CD4-positive, alpha-beta T cell (primary cell): ENCODE measurements at regions of chr17 and their contacts with region 1.

Region 1: DNA sequence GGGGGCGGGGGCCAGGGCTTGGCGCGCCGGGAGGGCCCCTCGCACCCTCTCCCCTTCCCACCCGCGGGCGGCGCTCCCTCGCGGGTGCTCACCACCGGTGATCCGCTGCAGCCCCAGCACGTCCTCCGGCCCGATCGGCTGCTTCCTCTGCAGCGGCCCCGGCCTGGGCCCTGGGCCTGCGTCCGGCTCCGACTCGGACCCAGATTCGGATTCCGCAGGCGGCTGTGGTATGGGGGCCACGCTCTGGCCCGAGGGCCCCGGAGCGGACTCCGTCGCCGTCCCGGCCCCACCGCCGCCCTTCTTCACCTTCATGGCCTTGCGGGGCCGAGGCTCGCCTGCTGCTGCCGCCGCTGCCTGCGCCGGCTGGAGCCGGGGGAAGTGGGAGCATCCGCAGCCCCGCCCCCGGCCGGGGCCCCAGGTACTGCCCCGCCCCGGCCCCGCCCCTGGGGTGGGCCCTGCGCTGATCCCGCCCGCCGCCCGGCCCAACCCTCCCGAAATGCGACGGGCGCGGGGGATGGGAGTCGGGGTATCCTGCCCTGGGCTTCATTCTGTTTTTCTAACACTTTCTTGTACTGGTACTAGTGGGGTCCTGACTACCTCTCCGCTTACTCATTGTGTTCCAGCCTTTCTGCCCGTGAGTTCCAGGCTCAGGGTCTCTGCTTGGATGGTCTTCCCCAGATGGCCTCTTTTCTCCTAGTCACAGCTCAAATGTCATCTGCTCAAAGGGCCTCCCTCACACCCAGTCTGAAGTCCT is at the start of gene UNC119:
- DNase-seq: peak; percentile 62 to 91 (median 77)
- ATAC-seq: peak; percentile 68
- H3K4me3 ChIP-seq: peak within 1 kb of the TSS; percentile 54
- H3K4me3 Mint-ChIP-seq: peak within 1 kb of the TSS; percentile 94
- H3K27ac ChIP-seq: peak within 1 kb of the TSS; percentile 48 to 76
- H3K27ac Mint-ChIP-seq: peak within 1 kb of the TSS; percentile 93
- H3K4me1 ChIP-seq: peaks cover 54% of the 10 kb centered on the region
- H3K4me1 Mint-ChIP-seq: peaks cover 52% of the 10 kb centered on the region
- H3K27me3 ChIP-seq: no peaks in the 10 kb centered on the region
- H3K27me3 Mint-ChIP-seq: no peaks in the 10 kb centered on the region
- CTCF ChIP-seq: no peak
- total RNA-seq, gene UNC119: 77.1 to 83.9 TPM

Region 2: DNA sequence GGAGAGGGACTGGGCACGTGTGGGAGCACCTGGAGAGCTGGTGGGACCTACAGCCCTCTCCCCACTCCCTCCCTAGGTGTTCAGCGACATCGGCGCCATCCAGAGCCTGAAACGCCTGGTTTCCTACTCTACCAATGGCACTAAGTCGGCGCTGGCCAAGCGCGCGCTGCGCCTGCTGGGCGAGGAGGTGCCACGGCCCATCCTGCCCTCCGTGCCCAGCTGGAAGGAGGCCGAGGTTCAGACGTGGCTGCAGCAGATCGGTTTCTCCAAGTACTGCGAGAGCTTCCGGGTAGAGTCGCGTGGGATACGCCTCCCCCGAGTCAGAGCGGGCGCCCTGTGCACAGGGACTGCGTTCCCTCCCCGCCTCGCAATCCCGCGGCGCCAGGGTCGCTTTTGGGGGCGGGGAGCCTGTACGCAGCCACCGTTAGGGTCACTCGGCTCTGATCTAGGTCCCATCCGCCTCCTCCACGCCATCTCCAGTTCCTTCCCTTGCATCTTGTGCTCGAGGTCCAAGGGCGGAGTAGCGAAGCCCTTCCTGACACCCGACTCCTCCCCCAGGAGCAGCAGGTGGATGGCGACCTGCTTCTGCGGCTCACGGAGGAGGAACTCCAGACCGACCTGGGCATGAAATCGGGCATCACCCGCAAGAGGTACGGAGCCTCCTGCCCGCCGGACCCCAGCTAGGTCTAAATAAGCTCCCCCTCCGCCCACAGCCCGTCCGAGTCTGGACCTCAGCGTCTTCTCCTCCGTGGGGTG is 168.0 kb before region 1 on chr17:
- CTCF ChIA-PET with region 1: no interaction called
- POLR2A ChIA-PET with region 1: no interaction called
- intact Hi-C with region 1: loop called in 1 of 2 experiments (anchors 10 kb)
- DNase-seq: peak in 13 of 14 experiments; percentile 44 to 78 (median 58)
- ATAC-seq: peak; percentile 93
- H3K4me3 ChIP-seq: peak overlapping the region; percentile 94
- H3K4me3 Mint-ChIP-seq: peak overlapping the region; percentile 94
- H3K27ac ChIP-seq: peak overlapping the region in 1 of 2 donors; percentile 17
- H3K27ac Mint-ChIP-seq: peak overlapping the region; percentile 64
- H3K4me1 ChIP-seq: peaks cover 29% of the 10 kb centered on the region
- H3K4me1 Mint-ChIP-seq: peaks cover 36% of the 10 kb centered on the region
- H3K27me3 ChIP-seq: no peaks in the 10 kb centered on the region
- H3K27me3 Mint-ChIP-seq: peaks cover 8% of the 10 kb centered on the region
- CTCF ChIP-seq: no peak

Region 3: DNA sequence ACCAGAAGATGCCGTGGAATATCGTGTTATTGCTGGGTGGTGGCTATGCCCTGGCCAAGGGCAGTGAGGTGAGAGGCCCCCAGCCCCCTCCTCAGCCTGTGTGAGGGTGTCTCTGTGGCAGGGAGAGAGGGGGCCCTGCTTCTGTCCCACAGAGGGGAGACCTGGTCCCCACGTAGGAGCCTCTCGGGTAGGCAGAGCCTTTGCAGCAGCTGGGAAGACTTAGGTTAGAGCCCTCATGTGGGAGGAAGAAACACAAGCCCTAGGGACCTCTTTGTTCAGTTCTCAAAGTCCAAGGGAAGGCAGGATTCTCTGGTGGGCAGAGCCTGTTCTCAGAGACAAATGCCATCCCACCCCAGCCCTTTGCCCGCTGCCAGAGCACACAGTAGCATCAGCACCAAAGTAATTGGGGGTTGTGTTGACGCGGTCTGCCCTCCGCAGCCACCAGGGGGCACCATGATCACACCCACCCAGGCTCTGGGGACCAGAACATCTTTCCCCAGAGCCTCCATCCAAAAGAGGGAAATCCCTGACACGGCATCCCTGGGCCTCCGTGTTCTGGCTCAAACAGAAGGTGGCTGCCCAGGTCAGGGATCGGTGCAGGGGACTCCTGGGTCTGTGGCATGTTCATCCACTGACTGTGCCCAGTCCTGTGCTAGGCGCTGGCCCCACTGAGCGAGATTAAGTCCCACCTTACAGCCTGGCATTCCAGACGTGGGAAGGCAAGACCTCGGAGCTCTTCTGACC is 57.8 kb before region 1 on chr17:
- CTCF ChIA-PET with region 1: no interaction called
- POLR2A ChIA-PET with region 1: no interaction called
- intact Hi-C with region 1: loop called in 1 of 2 experiments (anchors 2 kb)
- DNase-seq: peak; percentile 65 to 87 (median 78)
- ATAC-seq: peak; percentile 89
- H3K4me3 ChIP-seq: no peak overlapping the region
- H3K4me3 Mint-ChIP-seq: no peak overlapping the region
- H3K27ac ChIP-seq: no peak overlapping the region
- H3K27ac Mint-ChIP-seq: no peak overlapping the region
- H3K4me1 ChIP-seq: no peaks in the 10 kb centered on the region
- H3K4me1 Mint-ChIP-seq: no peaks in the 10 kb centered on the region
- H3K27me3 ChIP-seq: peaks cover 0 to 6% of the 10 kb centered on the region in 2 experiments
- H3K27me3 Mint-ChIP-seq: no peaks in the 10 kb centered on the region
- CTCF ChIP-seq: peak; percentile 82

Region 4: GRCh38 chr17:28509789-28510188 is 42.6 kb before region 1 on chr17:
- CTCF ChIA-PET with region 1: no interaction called
- POLR2A ChIA-PET with region 1: no interaction called
- intact Hi-C with region 1: no loop called
- DNase-seq: peak in 2 of 14 experiments; percentile 41 to 49
- ATAC-seq: no peak
- H3K4me3 ChIP-seq: no peak overlapping the region
- H3K4me3 Mint-ChIP-seq: no peak overlapping the region
- H3K27ac ChIP-seq: no peak overlapping the region
- H3K27ac Mint-ChIP-seq: no peak overlapping the region
- H3K4me1 ChIP-seq: no peaks in the 10 kb centered on the region
- H3K4me1 Mint-ChIP-seq: no peaks in the 10 kb centered on the region
- H3K27me3 ChIP-seq: peaks cover 7 to 21% of the 10 kb centered on the region in 2 experiments
- H3K27me3 Mint-ChIP-seq: peaks cover 48% of the 10 kb centered on the region
- CTCF ChIP-seq: no peak

Region 5: GRCh38 chr17:28571255-28572122 is 19.1 kb after region 1 on chr17 and contains the start of gene PIGS:
- CTCF ChIA-PET with region 1: interaction called, 4 read pairs
- POLR2A ChIA-PET with region 1: interaction called, 63 read pairs
- intact Hi-C with region 1: loop called (anchors 1 to 2 kb)
- DNase-seq: peak; percentile 78 to 95 (median 88)
- ATAC-seq: peak; percentile 96
- H3K4me3 ChIP-seq: peak within 1 kb of the TSS; percentile 95
- H3K4me3 Mint-ChIP-seq: peak within 1 kb of the TSS; percentile 94
- H3K27ac ChIP-seq: peak within 1 kb of the TSS; percentile 66 to 85
- H3K27ac Mint-ChIP-seq: peak within 1 kb of the TSS; percentile 91
- H3K4me1 ChIP-seq: peaks cover 55% of the 10 kb centered on the region
- H3K4me1 Mint-ChIP-seq: peaks cover 65% of the 10 kb centered on the region
- H3K27me3 ChIP-seq: no peaks in the 10 kb centered on the region
- H3K27me3 Mint-ChIP-seq: no peaks in the 10 kb centered on the region
- CTCF ChIP-seq: no peak
- total RNA-seq, gene PIGS: 73.8 to 76.4 TPM

Region 6: GRCh38 chr17:28576758-28577465 is 24.5 kb after region 1 on chr17 and contains the start of gene ALDOC:
- CTCF ChIA-PET with region 1: interaction called, 4 read pairs
- POLR2A ChIA-PET with region 1: interaction called, 63 read pairs
- intact Hi-C with region 1: loop called (anchors 1 to 2 kb)
- DNase-seq: peak; percentile 95 to 100 (median 98)
- ATAC-seq: peak; percentile 97
- H3K4me3 ChIP-seq: peak within 1 kb of the TSS; percentile 46
- H3K4me3 Mint-ChIP-seq: peak within 1 kb of the TSS; percentile 87
- H3K27ac ChIP-seq: peak within 1 kb of the TSS in 1 of 2 donors; percentile 41
- H3K27ac Mint-ChIP-seq: peak within 1 kb of the TSS; percentile 77
- H3K4me1 ChIP-seq: peaks cover 36% of the 10 kb centered on the region
- H3K4me1 Mint-ChIP-seq: peaks cover 31% of the 10 kb centered on the region
- H3K27me3 ChIP-seq: no peaks in the 10 kb centered on the region
- H3K27me3 Mint-ChIP-seq: no peaks in the 10 kb centered on the region
- CTCF ChIP-seq: no peak
- total RNA-seq, gene ALDOC: 21.8 to 22.7 TPM

Region 7: DNA sequence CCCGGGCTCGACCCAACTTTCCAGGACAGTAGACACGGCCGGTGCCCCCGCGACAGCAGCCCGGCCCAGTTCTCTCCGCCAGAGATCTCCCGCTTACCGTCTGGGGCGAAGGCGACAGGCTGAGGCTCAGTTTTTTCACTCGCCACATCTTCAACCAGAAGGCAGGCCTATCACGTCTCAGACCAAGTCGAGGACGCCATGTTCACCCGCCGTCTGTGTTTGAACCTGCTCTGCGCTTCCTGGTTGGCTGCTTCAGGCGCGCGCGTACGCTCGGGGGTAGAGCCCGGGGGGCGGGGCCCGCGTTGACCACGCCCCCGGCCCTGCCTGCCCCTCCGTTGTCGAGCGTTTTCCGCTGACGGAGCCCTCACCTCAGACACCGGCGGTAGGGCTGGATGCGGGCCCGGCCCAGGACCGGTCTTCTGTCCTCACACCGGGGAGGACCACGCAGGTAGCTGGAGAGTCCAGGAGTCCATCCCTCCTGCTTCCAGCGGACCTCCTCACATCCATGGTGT is 46.4 kb after region 1 on chr17 and contains the start of gene SPAG5:
- CTCF ChIA-PET with region 1: interaction called, 4 read pairs
- POLR2A ChIA-PET with region 1: interaction called, 7 read pairs
- intact Hi-C with region 1: loop called (anchors 1 to 2 kb)
- DNase-seq: peak; percentile 89 to 98 (median 95)
- ATAC-seq: peak; percentile 89
- H3K4me3 ChIP-seq: peak within 1 kb of the TSS; percentile 60
- H3K4me3 Mint-ChIP-seq: peak within 1 kb of the TSS; percentile 90
- H3K27ac ChIP-seq: peak within 1 kb of the TSS; percentile 92 to 99
- H3K27ac Mint-ChIP-seq: peak within 1 kb of the TSS; percentile 94
- H3K4me1 ChIP-seq: peaks cover 20% of the 10 kb centered on the region
- H3K4me1 Mint-ChIP-seq: peaks cover 24% of the 10 kb centered on the region
- H3K27me3 ChIP-seq: no peaks in the 10 kb centered on the region
- H3K27me3 Mint-ChIP-seq: no peaks in the 10 kb centered on the region
- CTCF ChIP-seq: no peak
- total RNA-seq, gene SPAG5: 15.4 to 17.0 TPM

Region 8: GRCh38 chr17:28612936-28613872 is 60.8 kb after region 1 on chr17:
- CTCF ChIA-PET with region 1: interaction called, 4 read pairs
- POLR2A ChIA-PET with region 1: no interaction called
- intact Hi-C with region 1: loop called (anchors 2 to 5 kb)
- DNase-seq: peak; percentile 16 to 66 (median 26)
- ATAC-seq: peak; percentile 49
- H3K4me3 ChIP-seq: no peak overlapping the region
- H3K4me3 Mint-ChIP-seq: no peak overlapping the region
- H3K27ac ChIP-seq: no peak overlapping the region
- H3K27ac Mint-ChIP-seq: peak overlapping the region; percentile 34
- H3K4me1 ChIP-seq: no peaks in the 10 kb centered on the region
- H3K4me1 Mint-ChIP-seq: peaks cover 5% of the 10 kb centered on the region
- H3K27me3 ChIP-seq: no peaks in the 10 kb centered on the region
- H3K27me3 Mint-ChIP-seq: no peaks in the 10 kb centered on the region
- CTCF ChIP-seq: peak; percentile 86

Region 9: GRCh38 chr17:28792877-28793661 is 240.6 kb after region 1 on chr17:
- CTCF ChIA-PET with region 1: no interaction called
- POLR2A ChIA-PET with region 1: no interaction called
- intact Hi-C with region 1: no loop called
- DNase-seq: no peak
- ATAC-seq: no peak
- H3K4me3 ChIP-seq: no peak overlapping the region
- H3K4me3 Mint-ChIP-seq: no peak overlapping the region
- H3K27ac ChIP-seq: no peak overlapping the region
- H3K27ac Mint-ChIP-seq: no peak overlapping the region
- H3K4me1 ChIP-seq: no peaks in the 10 kb centered on the region
- H3K4me1 Mint-ChIP-seq: peaks cover 32% of the 10 kb centered on the region
- H3K27me3 ChIP-seq: no peaks in the 10 kb centered on the region
- H3K27me3 Mint-ChIP-seq: no peaks in the 10 kb centered on the region
- CTCF ChIP-seq: no peak